Astrocyte of the cerebellum (primary cell): ENCODE measurements at regions of chr16 and their contacts with region 1.

Region 1: GRCh38 chr16:89217388-89218191 is at the start of gene ZNF778:
- DNase-seq: peak; percentile 42
- H3K4me3 ChIP-seq: peak within 1 kb of the TSS; percentile 92
- CTCF ChIP-seq: no peak

Region 2: DNA sequence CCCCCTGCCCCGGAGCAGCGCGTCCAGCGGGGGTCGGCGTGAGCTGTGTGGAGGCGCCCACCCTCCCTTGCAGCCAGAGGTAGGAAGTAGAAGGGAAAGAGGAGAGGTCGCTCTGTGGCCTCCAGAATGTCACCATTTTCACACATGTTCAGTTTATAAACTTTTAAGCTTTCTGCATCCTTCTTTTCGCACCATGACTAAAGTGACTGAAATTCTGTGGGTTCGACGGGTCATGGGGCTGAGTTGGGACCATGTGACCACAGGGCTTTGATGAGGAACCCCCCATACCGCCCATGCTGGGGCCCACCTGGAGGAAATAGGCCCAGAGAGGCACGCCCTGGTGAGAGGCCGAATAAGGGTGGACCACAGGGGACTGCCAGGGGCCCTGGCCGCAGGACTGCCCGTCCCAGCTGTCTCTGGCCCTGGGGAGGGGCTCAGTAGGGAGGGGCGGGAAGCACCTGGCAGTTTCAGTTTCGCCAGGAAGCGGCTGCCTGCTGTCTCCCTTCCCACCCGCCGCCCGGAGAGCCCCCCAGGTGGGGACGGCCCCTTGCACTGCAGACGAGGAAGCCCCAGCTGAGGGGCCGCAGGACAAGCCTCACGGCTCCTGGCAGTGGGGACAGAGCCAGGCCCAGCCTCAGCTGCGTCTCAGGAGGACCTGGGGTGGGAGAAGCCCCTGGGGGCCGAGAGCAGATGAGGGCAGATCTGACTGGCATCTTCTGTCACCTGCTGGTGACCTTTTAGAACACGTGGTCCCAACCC is 249.6 kb before region 1 on chr16:
- in situ Hi-C with region 1: loop called (anchors 25 kb)
- DNase-seq: no peak
- H3K4me3 ChIP-seq: no peak overlapping the region
- CTCF ChIP-seq: no peak

Region 3: DNA sequence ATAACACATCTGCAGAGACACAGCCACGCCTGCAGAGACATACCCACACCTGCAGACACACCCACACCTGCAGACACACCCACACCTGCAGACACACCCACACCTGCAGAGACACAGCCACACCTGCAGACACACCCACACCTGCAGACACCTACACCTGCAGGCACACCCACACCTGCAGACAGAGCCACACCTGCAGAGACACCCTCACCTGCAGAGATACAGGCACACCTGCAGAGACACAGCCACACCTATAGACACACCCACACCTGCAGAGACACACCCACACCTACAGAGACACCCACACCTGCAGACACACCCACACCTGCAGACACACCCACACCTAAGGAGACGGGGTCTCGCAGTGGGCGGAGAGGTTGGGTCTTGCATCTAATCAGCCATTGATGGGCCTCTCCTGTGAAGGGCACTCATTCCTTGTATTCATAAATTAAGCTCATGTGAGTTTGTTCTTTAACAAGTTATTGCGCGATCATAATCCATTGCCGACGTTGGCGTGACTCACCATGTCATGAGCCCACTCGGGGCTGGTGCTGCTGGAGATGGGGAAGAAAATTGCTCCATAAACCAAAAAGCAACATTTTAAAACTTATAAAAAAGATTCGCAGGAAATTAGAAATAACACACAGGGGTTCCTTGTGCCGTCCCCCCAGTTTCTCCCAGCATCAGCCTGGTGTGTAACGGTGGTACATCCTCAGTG is 75.0 kb before region 1 on chr16:
- in situ Hi-C with region 1: loop called (anchors 5 kb)
- DNase-seq: no peak
- H3K4me3 ChIP-seq: no peak overlapping the region
- CTCF ChIP-seq: no peak

Region 4: DNA sequence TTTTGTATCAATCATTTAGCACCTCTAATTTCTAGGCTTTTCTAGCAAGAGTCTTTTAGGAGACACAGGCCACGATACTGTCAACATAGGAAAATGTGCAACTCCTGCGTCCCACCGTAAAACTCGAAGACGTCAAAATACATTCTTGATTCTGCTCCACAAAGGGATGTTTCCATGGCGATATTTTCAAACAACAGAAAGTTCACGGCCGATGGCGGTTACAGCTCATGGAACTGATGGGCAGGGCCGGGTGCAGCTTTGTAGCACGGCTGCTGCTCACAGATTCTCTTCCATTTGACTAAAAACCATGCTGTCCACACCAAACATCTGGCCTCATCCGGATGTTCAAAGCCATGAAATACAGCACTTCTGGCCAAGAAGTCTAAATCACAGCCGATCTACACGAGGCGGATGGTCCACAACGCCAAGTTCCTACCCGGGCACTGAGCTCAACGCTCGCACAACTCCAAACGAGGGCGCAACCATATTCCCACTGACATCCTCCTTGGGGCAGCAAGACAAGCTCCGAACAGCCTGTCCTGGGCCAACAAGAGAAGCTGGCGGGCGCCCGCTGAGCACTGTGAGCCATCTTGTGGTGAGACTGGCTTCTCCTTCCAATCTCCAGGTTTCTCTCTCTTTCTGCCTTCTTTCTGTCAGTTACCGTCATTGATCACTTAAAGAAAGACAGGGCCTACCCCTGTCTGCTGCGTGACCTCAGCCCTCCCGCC is 79.7 kb after region 1 on chr16:
- in situ Hi-C with region 1: loop called (anchors 5 kb)
- DNase-seq: no peak
- H3K4me3 ChIP-seq: no peak overlapping the region
- CTCF ChIP-seq: no peak